CD8-positive, alpha-beta T cell (primary cell): ENCODE measurements at regions of chr17 and their contacts with region 1.

Region 1: GRCh38 chr17:5031365-5032082 is 3.7 kb downstream of the SLC52A1 start:
- DNase-seq: peak; percentile 71 to 91 (median 85)
- ATAC-seq: peak; percentile 87
- H3K4me3 ChIP-seq: peak overlapping the region; percentile 30 to 55
- H3K4me3 Mint-ChIP-seq: peak overlapping the region; percentile 83
- H3K27ac ChIP-seq: peak overlapping the region; percentile 26 to 67
- H3K27ac Mint-ChIP-seq: peak overlapping the region; percentile 84
- H3K4me1 ChIP-seq: peaks cover 13% of the 10 kb centered on the region
- H3K4me1 Mint-ChIP-seq: peaks cover 14% of the 10 kb centered on the region
- H3K27me3 ChIP-seq: no peaks in the 10 kb centered on the region
- H3K27me3 Mint-ChIP-seq: peaks cover 2% of the 10 kb centered on the region
- CTCF ChIP-seq: peak; percentile 71

Region 2: GRCh38 chr17:5049314-5049895 is 17.9 kb after region 1 on chr17:
- CTCF ChIA-PET with region 1: interaction called, 21 read pairs
- POLR2A ChIA-PET with region 1: interaction called, 14 read pairs
- intact Hi-C with region 1: loop called in 1 of 2 experiments (anchors 2 kb)
- DNase-seq: peak; percentile 42 to 93 (median 71)
- ATAC-seq: peak; percentile 97
- H3K4me3 ChIP-seq: no peak overlapping the region
- H3K4me3 Mint-ChIP-seq: peak overlapping the region; percentile 49
- H3K27ac ChIP-seq: peak overlapping the region; percentile 8 to 64
- H3K27ac Mint-ChIP-seq: peak overlapping the region; percentile 95
- H3K4me1 ChIP-seq: peaks cover 24% of the 10 kb centered on the region
- H3K4me1 Mint-ChIP-seq: peaks cover 47% of the 10 kb centered on the region
- H3K27me3 ChIP-seq: no peaks in the 10 kb centered on the region
- H3K27me3 Mint-ChIP-seq: no peaks in the 10 kb centered on the region
- CTCF ChIP-seq: no peak

Region 3: DNA sequence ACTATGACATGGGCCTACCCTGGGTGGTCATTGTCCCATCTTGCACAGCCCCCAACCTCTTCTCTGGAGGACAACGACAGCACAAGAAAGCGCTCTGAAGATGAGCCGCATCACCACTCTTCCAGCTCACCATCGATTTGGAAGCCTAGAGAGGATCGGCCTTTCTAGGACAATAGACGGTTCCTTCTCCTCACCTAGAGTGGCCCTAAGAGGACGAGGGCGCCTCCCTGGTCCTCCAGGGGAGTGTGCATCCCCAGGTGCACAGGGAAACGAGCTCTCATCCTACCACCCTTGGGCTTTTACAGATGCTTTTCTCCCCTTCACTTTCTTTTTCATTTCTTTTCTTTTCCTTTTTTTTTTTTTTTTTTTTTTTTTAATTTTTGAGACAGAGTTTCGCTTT is 24.0 kb after region 1 on chr17:
- CTCF ChIA-PET with region 1: interaction called, 135 read pairs
- POLR2A ChIA-PET with region 1: interaction called, 10 read pairs
- intact Hi-C with region 1: no loop called
- DNase-seq: no peak
- ATAC-seq: no peak
- H3K4me3 ChIP-seq: no peak overlapping the region
- H3K4me3 Mint-ChIP-seq: no peak overlapping the region
- H3K27ac ChIP-seq: no peak overlapping the region
- H3K27ac Mint-ChIP-seq: no peak overlapping the region
- H3K4me1 ChIP-seq: no peaks in the 10 kb centered on the region
- H3K4me1 Mint-ChIP-seq: peaks cover under 1% of the 10 kb centered on the region
- H3K27me3 ChIP-seq: no peaks in the 10 kb centered on the region
- H3K27me3 Mint-ChIP-seq: no peaks in the 10 kb centered on the region
- CTCF ChIP-seq: no peak

Region 4: GRCh38 chr17:5877948-5878347 is 846.4 kb after region 1 on chr17:
- CTCF ChIA-PET with region 1: no interaction called
- POLR2A ChIA-PET with region 1: no interaction called
- intact Hi-C with region 1: no loop called
- DNase-seq: no peak
- ATAC-seq: no peak
- H3K4me3 ChIP-seq: no peak overlapping the region
- H3K4me3 Mint-ChIP-seq: no peak overlapping the region
- H3K27ac ChIP-seq: no peak overlapping the region
- H3K27ac Mint-ChIP-seq: no peak overlapping the region
- H3K4me1 ChIP-seq: no peaks in the 10 kb centered on the region
- H3K4me1 Mint-ChIP-seq: peaks cover 2% of the 10 kb centered on the region
- H3K27me3 ChIP-seq: no peaks in the 10 kb centered on the region
- H3K27me3 Mint-ChIP-seq: peaks cover 26% of the 10 kb centered on the region
- CTCF ChIP-seq: no peak